ENCODE measurements at regions of chr5 and their contacts with region 1.

Region 1: DNA sequence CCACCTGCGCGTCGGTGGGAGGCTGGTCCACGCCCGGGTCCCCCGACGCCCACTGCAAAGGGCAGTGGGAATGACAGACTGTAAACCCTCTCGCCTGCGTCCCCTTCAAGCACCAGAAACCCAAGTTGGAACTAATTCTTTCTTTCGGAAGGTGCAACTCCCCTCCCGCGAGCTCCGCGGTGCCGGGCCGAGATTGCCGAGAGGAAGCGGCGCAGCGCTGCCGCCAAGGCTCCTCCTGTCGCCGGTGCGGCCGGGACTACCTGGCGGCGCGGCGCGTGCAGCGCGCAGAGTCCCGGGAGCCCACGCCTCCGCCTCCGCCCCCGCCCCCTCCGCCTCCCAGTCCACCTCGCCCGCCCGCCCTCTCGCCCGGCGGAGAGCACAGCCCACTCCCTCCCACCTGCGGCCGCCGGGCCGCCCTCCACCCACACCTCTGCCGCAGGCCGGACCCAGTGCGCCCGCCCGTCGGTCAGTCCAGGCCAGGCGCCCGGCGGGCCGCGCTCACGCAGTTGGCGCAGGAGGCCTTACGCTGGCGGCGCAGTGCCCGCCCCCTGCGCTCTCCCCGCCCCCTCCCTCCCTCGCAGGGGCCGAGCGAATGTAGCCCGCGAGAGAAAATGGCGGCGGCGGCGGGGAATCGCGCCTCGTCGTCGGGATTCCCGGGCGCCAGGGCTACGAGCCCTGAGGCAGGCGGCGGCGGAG is at the start of gene MAP3K1:
- DNase-seq: peak; percentile 62 to 92 (median 80)
- ATAC-seq: peak; percentile 71
- H3K4me3 ChIP-seq: peak within 1 kb of the TSS; percentile 61 to 93
- H3K4me3 Mint-ChIP-seq: peak within 1 kb of the TSS; percentile 90
- H3K27ac ChIP-seq: peak within 1 kb of the TSS; percentile 74 to 78
- H3K27ac Mint-ChIP-seq: peak within 1 kb of the TSS; percentile 93
- H3K4me1 ChIP-seq: peaks cover 24% of the 10 kb centered on the region
- H3K4me1 Mint-ChIP-seq: peaks cover 33% of the 10 kb centered on the region
- H3K27me3 ChIP-seq: no peaks in the 10 kb centered on the region
- H3K27me3 Mint-ChIP-seq: no peaks in the 10 kb centered on the region
- CTCF ChIP-seq: no peak
- total RNA-seq, gene MAP3K1: 19.1 TPM

Region 2: DNA sequence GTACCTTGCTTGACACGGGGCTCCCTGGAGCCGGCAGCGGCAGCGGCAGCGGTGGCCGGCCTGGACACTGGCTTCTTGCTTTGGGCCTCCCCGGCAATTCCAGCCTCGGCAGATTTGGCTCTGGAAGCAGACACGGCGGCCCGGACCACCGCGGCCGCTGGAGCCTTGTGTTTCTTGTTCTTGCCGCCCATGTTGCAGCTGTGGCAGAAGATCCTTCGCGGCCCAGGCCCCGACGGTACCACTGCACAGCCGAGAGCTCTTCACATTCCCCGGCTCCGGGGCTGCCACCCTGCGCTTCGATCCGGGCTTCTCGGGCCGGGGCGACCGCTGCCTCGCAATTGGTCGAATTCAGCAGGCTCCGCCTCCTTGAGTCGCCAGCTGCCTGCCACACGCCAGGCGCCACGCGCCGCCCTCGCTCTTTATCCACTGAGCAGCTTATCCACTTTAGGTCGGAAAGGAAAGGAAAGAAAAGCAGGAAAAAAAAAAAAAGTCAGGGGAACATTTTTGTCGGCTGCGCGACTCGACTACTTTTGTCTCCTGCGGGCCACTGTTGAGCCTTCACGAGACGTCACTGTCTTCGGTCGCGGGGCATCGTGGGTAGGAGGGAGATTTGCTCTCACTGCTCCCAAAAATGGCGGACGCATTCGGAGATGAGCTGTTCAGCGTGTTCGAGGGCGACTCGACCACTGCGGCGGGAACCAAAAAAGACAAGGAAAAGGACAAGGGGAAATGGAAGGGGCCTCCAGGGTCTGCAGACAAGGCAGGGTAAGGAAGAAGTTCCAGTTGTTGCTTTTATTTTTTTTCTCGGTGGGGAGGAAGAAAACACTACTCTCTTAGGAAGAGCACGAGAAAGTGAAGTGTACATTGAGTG is 1507.5 kb before region 1 on chr5 and contains the starts of genes DHX29 and MTREX:
- CTCF ChIA-PET with region 1: no interaction called
- POLR2A ChIA-PET with region 1: no interaction called
- intact Hi-C with region 1: loop called (anchors 10 kb)
- DNase-seq: peak; percentile 76 to 93 (median 87)
- ATAC-seq: peak; percentile 90
- H3K4me3 ChIP-seq: peak within 1 kb of the TSS; percentile 72 to 76
- H3K4me3 Mint-ChIP-seq: no peak within 1 kb of the TSS
- H3K27ac ChIP-seq: peak within 1 kb of the TSS; percentile 86 to 90
- H3K27ac Mint-ChIP-seq: no peak within 1 kb of the TSS
- H3K4me1 ChIP-seq: peaks cover 41% of the 10 kb centered on the region
- H3K4me1 Mint-ChIP-seq: peaks cover 38% of the 10 kb centered on the region
- H3K27me3 ChIP-seq: no peaks in the 10 kb centered on the region
- H3K27me3 Mint-ChIP-seq: no peaks in the 10 kb centered on the region
- CTCF ChIP-seq: no peak
- total RNA-seq, gene DHX29: 15.4 to 19.9 TPM
- total RNA-seq, gene MTREX: 62.8 to 66.5 TPM

Region 3: DNA sequence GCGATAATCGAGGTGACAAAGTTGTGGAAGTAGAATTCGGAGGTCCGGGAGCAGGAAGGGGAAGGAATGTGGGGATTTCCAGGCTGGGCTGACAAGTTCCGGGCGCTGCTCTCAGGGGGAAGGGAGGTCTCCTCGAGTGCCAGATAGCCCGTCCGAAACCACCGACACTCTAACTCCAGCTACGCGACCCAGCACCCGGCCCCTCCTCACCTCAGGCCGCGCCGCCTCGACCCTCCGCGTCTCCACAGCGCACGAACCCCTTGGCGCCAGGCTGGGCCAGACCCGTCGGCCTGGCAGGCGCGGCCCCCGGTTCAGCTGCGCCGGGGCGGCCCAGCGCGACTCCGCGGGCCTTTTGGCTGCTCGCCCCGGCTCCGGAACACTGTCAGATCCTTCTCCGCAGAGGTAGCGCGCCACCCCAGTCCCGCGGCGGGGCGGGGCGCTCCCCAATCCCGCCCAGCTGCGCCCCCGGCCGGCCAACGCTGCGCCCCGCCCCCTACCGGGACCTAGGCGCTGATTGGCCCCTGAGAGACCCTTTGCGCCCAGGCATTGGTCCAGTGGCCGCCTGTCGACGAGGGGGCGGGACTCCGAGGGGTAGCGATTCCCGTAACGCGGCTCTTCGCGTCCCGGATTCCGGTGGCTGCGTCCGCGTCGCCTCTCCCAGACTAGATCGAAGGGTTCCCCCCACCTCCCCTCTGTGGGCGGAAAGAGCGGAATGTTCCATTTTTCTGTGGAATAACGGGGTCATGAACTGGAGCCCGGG is 820.4 kb before region 1 on chr5 and contains the start of gene IL6ST:
- CTCF ChIA-PET with region 1: no interaction called
- POLR2A ChIA-PET with region 1: no interaction called
- intact Hi-C with region 1: loop called (anchors 2 kb)
- DNase-seq: peak; percentile 90 to 97 (median 95)
- ATAC-seq: peak; percentile 93
- H3K4me3 ChIP-seq: peak within 1 kb of the TSS; percentile 87 to 89
- H3K4me3 Mint-ChIP-seq: peak within 1 kb of the TSS; percentile 99
- H3K27ac ChIP-seq: peak within 1 kb of the TSS; percentile 93
- H3K27ac Mint-ChIP-seq: peak within 1 kb of the TSS; percentile 98
- H3K4me1 ChIP-seq: peaks cover 26% of the 10 kb centered on the region
- H3K4me1 Mint-ChIP-seq: peaks cover 54% of the 10 kb centered on the region
- H3K27me3 ChIP-seq: no peaks in the 10 kb centered on the region
- H3K27me3 Mint-ChIP-seq: no peaks in the 10 kb centered on the region
- CTCF ChIP-seq: no peak
- total RNA-seq, gene IL6ST: 201 to 214 TPM

Region 4: DNA sequence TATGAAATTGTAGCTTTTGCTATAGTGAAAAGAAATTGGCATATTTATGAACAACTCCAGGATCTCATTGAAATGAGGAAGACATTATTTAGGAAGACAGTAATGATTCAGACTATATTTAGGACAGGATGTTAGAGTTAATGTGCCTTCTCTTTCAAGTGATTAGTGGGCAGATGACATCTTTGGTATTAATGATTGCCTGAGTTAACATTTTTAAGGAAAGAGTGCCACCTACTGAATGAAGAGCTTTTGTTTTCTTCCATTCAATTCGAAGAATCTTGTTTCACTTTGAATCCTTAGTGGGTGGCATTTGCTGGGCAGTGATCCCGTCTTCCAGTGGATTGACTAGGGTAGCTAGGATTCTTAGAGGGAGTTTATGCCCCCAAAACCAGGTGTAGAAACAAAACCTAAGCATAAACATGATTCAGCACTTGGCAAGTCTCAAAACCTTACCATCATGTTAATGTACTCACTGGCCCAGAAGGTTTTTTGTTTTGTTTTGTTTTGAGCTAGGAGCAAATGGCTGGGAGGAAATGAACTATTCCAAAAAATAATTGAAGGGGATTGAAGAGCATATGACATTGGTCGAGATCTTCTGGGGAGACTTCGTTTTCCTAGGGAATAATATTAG is 23.4 kb after region 1 on chr5:
- CTCF ChIA-PET with region 1: interaction called, 7 read pairs
- POLR2A ChIA-PET with region 1: interaction called, 5 read pairs
- intact Hi-C with region 1: loop called (anchors 1 to 2 kb)
- DNase-seq: peak in 2 of 9 experiments; percentile 68 to 76
- ATAC-seq: peak; percentile 74
- H3K4me3 ChIP-seq: no peak overlapping the region
- H3K4me3 Mint-ChIP-seq: peak overlapping the region; percentile 42
- H3K27ac ChIP-seq: no peak overlapping the region
- H3K27ac Mint-ChIP-seq: peak overlapping the region; percentile 75
- H3K4me1 ChIP-seq: peaks cover 20% of the 10 kb centered on the region
- H3K4me1 Mint-ChIP-seq: peaks cover 79% of the 10 kb centered on the region
- H3K27me3 ChIP-seq: no peaks in the 10 kb centered on the region
- H3K27me3 Mint-ChIP-seq: no peaks in the 10 kb centered on the region
- CTCF ChIP-seq: peak; percentile 60

Region 5: DNA sequence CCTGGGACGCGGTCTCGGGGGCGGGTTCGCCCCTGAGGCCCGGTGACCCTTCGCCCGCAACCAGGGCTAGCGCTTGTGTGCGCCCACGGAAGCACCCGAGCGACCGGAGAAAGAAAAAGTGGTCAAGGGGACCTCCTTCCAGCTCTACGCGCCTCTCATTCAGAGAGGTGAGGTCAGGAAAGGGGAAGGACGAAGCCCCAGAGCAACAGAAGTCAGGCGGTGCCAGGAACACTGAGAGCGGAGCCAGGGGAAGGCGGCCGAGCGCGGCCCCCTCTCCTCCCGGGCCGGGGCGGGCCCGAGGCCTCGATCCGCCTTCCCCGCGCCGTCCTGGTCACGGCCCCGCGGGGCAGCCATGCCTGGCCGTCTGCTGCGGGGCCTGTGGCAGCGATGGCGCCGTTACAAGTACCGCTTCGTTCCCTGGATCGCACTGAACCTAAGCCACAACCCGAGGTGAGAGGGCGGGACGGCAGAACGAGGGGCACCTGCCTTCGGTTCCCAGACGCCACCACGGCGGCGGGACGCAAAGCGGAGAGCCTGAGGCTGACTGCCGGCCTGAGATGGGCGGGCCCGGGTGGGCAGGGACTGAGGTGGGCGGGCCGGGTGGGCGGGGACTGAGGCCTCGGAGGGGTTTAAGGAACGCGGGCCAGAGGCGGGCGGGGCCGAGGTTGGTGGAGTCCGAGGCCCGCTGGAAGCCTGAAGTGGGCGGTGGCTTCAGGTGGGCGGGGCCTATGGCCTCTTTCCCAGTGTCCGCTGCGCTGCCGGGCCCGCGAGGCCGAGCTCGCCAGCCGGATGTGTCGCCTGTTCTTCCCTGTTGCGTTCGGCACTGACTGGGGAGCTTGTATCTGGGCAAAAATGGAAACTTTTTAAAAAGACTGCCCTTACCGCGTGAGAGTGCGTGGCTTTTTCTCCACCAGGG is 94.4 kb after region 1 on chr5 and contains the start of gene SETD9:
- CTCF ChIA-PET with region 1: no interaction called
- POLR2A ChIA-PET with region 1: no interaction called
- intact Hi-C with region 1: loop called (anchors 1 kb)
- DNase-seq: peak; percentile 67 to 94 (median 87)
- ATAC-seq: peak; percentile 82
- H3K4me3 ChIP-seq: peak within 1 kb of the TSS; percentile 88
- H3K4me3 Mint-ChIP-seq: peak within 1 kb of the TSS; percentile 89
- H3K27ac ChIP-seq: peak within 1 kb of the TSS; percentile 61 to 87
- H3K27ac Mint-ChIP-seq: peak within 1 kb of the TSS; percentile 88
- H3K4me1 ChIP-seq: peaks cover 8% of the 10 kb centered on the region
- H3K4me1 Mint-ChIP-seq: peaks cover 20% of the 10 kb centered on the region
- H3K27me3 ChIP-seq: no peaks in the 10 kb centered on the region
- H3K27me3 Mint-ChIP-seq: no peaks in the 10 kb centered on the region
- CTCF ChIP-seq: no peak
- total RNA-seq, gene SETD9: 2.5 to 2.9 TPM

Region 6: DNA sequence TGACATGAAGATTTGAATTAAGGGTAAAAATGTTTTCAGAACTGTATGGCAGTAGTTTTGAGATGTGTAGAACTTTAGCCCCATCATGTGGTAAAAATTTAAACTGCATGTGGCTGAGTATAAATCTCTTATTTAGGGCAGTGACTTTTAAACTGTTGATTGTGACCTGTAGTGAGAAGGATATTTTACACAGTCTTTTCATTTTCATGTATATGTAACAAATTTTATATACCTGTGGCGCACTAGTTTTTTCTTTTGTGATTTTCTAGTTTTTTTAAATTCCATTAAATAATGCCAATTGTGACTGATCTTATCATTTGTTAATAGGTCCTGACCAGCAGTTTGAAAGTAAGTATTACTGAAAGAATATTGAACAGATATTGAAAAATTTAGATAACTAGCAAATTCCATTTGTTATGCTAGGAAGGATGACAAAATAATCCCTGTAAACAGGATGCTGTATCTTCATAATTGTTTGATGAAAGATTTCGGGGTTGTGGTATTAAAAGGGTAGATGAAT is 406.0 kb after region 1 on chr5:
- CTCF ChIA-PET with region 1: no interaction called
- POLR2A ChIA-PET with region 1: no interaction called
- intact Hi-C with region 1: loop called in 1 of 2 experiments (anchors 10 kb)
- DNase-seq: peak in 3 of 9 experiments; percentile 51 to 83 (median 78)
- ATAC-seq: peak; percentile 83
- H3K4me3 ChIP-seq: no peak overlapping the region
- H3K4me3 Mint-ChIP-seq: no peak overlapping the region
- H3K27ac ChIP-seq: no peak overlapping the region
- H3K27ac Mint-ChIP-seq: peak overlapping the region; percentile 64
- H3K4me1 ChIP-seq: peaks cover 14% of the 10 kb centered on the region
- H3K4me1 Mint-ChIP-seq: peaks cover 53% of the 10 kb centered on the region
- H3K27me3 ChIP-seq: no peaks in the 10 kb centered on the region
- H3K27me3 Mint-ChIP-seq: no peaks in the 10 kb centered on the region
- CTCF ChIP-seq: peak; percentile 99

Measured in CD8-positive, alpha-beta T cell (primary cell).